ENCODE measurements at regions of chr13 and their contacts with region 1.

Region 1: DNA sequence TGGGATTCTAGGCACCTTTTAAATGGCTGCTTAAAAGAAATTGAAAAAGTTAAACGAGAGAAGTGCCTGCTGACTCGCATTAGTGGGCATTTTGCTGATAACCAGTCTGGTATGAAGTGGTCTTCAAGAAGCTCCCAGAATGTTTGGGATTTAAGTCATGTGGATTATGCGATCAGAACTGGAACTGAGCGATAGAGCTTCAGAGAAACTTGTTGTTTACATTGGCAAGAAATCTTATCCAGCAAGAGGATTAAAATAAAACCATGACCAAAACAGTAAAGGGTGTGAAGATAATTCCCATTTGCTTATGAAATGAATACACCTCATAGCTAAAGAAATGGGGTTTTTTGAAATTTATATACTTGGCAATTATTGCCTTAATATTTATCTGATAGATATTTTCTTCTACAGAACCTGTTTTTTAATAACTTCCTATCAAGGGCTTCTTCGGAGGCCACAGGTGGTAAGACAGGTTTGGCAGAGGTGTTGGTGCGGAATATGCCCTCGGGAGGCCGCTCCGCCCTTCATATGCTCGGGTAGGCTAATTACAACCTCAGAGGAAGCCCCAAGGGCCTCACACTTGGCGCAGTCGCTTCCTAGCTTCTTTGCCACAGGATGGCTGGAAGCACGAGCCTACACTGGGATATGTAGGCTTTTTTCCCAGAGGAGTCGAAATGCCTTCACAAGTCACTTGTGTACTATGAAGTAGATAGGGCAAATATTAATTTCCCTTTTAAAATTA is 68.6 kb downstream of the LMO7 start:
- DNase-seq: no peak
- ATAC-seq: no peak
- H3K4me3 ChIP-seq: no peak overlapping the region
- H3K4me3 Mint-ChIP-seq: no peak overlapping the region
- H3K27ac ChIP-seq: no peak overlapping the region
- H3K27ac Mint-ChIP-seq: no peak overlapping the region
- H3K4me1 ChIP-seq: no peaks in the 10 kb centered on the region
- H3K4me1 Mint-ChIP-seq: peaks cover 7% of the 10 kb centered on the region
- H3K27me3 ChIP-seq: no peaks in the 10 kb centered on the region
- H3K27me3 Mint-ChIP-seq: no peaks in the 10 kb centered on the region
- CTCF ChIP-seq: no peak

Region 2: GRCh38 chr13:74751739-74752138 is 953.0 kb before region 1 on chr13:
- CTCF ChIA-PET with region 1: no interaction called
- POLR2A ChIA-PET with region 1: no interaction called
- intact Hi-C with region 1: no loop called
- DNase-seq: no peak
- ATAC-seq: no peak
- H3K4me3 ChIP-seq: no peak overlapping the region
- H3K4me3 Mint-ChIP-seq: no peak overlapping the region
- H3K27ac ChIP-seq: no peak overlapping the region
- H3K27ac Mint-ChIP-seq: no peak overlapping the region
- H3K4me1 ChIP-seq: no peaks in the 10 kb centered on the region
- H3K4me1 Mint-ChIP-seq: no peaks in the 10 kb centered on the region
- H3K27me3 ChIP-seq: no peaks in the 10 kb centered on the region
- H3K27me3 Mint-ChIP-seq: no peaks in the 10 kb centered on the region
- CTCF ChIP-seq: no peak

Region 3: DNA sequence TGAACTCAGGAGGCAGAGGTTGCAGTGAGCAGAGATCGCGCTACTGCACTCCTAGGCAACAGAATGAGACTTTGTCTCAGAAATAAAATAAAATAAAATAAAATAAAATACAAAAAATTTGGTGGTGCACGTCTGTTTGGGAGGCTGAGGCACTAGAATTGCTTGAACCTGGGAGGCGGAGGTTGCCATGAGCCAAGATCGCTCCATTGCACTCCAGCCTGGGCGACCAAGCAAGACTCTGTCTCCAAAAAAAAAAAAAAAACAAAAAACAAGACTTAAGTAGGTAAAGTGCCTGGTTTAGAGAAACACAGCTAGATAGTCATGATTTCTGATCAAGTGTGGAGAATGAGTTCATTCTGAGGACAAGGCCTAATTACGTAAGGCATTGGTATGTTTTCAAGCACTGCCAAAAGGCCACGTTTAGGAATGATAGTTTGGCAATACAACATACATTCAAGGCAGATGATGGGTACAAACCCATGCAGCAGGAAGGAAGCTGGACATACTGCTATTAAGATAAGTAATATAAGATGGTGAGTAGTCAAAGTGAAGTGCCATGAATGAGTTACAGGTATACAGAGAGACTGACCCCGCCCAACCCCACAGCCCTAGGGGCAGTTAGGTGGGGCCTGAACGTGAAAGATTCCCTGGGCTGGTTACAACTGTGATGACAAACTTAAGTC is 159.9 kb before region 1 on chr13:
- CTCF ChIA-PET with region 1: no interaction called
- POLR2A ChIA-PET with region 1: no interaction called
- intact Hi-C with region 1: no loop called
- DNase-seq: no peak
- ATAC-seq: no peak
- H3K4me3 ChIP-seq: no peak overlapping the region
- H3K4me3 Mint-ChIP-seq: no peak overlapping the region
- H3K27ac ChIP-seq: no peak overlapping the region
- H3K27ac Mint-ChIP-seq: no peak overlapping the region
- H3K4me1 ChIP-seq: peaks cover 7% of the 10 kb centered on the region
- H3K4me1 Mint-ChIP-seq: peaks cover 9% of the 10 kb centered on the region
- H3K27me3 ChIP-seq: no peaks in the 10 kb centered on the region
- H3K27me3 Mint-ChIP-seq: no peaks in the 10 kb centered on the region
- CTCF ChIP-seq: no peak

Region 4: GRCh38 chr13:75687150-75687763 is 17.5 kb before region 1 on chr13:
- CTCF ChIA-PET with region 1: no interaction called
- POLR2A ChIA-PET with region 1: no interaction called
- intact Hi-C with region 1: no loop called
- DNase-seq: no peak
- ATAC-seq: no peak
- H3K4me3 ChIP-seq: no peak overlapping the region
- H3K4me3 Mint-ChIP-seq: no peak overlapping the region
- H3K27ac ChIP-seq: no peak overlapping the region
- H3K27ac Mint-ChIP-seq: no peak overlapping the region
- H3K4me1 ChIP-seq: no peaks in the 10 kb centered on the region
- H3K4me1 Mint-ChIP-seq: no peaks in the 10 kb centered on the region
- H3K27me3 ChIP-seq: no peaks in the 10 kb centered on the region
- H3K27me3 Mint-ChIP-seq: no peaks in the 10 kb centered on the region
- CTCF ChIP-seq: peak; percentile 23

Region 5: GRCh38 chr13:75736173-75736572 is 31.4 kb after region 1 on chr13:
- CTCF ChIA-PET with region 1: no interaction called
- POLR2A ChIA-PET with region 1: no interaction called
- intact Hi-C with region 1: no loop called
- DNase-seq: no peak
- ATAC-seq: no peak
- H3K4me3 ChIP-seq: no peak overlapping the region
- H3K4me3 Mint-ChIP-seq: no peak overlapping the region
- H3K27ac ChIP-seq: no peak overlapping the region
- H3K27ac Mint-ChIP-seq: no peak overlapping the region
- H3K4me1 ChIP-seq: no peaks in the 10 kb centered on the region
- H3K4me1 Mint-ChIP-seq: no peaks in the 10 kb centered on the region
- H3K27me3 ChIP-seq: no peaks in the 10 kb centered on the region
- H3K27me3 Mint-ChIP-seq: no peaks in the 10 kb centered on the region
- CTCF ChIP-seq: no peak

Region 6: DNA sequence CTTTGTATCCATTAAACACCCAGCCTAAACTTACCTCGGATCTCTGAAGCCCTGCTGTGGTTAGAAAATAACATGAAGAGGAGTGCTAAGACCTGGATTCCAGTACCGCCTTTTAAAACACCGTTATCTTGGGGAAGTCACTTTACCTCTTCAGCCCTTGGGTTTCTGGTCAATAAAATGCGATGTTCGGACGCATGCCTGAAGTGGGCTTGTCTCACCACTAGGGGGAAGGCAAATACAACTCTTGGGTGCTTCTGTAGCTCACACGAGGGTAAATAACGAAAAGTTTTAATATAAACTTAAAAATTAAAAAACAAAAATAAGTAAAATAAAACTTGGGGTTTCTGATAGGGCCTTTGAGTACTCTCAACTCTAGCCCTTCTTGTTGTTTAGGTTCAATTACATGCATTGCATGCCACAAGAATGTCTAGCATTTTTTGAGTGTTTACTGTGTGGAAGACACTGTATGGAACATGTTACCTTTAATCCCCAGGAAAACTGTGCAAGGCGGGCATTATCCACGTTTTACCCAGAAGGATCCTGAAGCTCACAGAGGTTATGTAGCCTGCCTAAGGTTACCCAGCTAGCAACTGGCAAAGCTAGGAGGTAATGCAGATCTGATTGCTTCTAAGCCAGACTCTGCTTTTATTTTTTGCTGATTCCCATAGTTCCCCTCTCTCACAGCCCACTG is 171.8 kb after region 1 on chr13:
- CTCF ChIA-PET with region 1: no interaction called
- POLR2A ChIA-PET with region 1: no interaction called
- intact Hi-C with region 1: loop called in 1 of 2 experiments (anchors 1 kb)
- DNase-seq: peak; percentile 13 to 76 (median 32)
- ATAC-seq: peak; percentile 93
- H3K4me3 ChIP-seq: no peak overlapping the region
- H3K4me3 Mint-ChIP-seq: peak overlapping the region; percentile 52
- H3K27ac ChIP-seq: no peak overlapping the region
- H3K27ac Mint-ChIP-seq: no peak overlapping the region
- H3K4me1 ChIP-seq: peaks cover 10% of the 10 kb centered on the region
- H3K4me1 Mint-ChIP-seq: peaks cover 15% of the 10 kb centered on the region
- H3K27me3 ChIP-seq: no peaks in the 10 kb centered on the region
- H3K27me3 Mint-ChIP-seq: peaks cover 4% of the 10 kb centered on the region
- CTCF ChIP-seq: peak; percentile 89